Activated naive CD4-positive, alpha-beta T cell treated with anti-CD3 and anti-CD28 coated beads, Interleukin-2, amount 10 ng/mL, durations not matched to agents 7 days and 5 days (primary cell): ENCODE measurements at regions of chr10 and their contacts with region 1.

Region 1: GRCh38 chr10:132446661-132447194 is 49.7 kb downstream of the PWWP2B start:
- DNase-seq: peak; percentile 89
- H3K4me3 Mint-ChIP-seq: peak overlapping the region; percentile 72
- H3K27ac Mint-ChIP-seq: peak overlapping the region; percentile 97
- H3K4me1 Mint-ChIP-seq: peaks cover 56% of the 10 kb centered on the region
- H3K27me3 Mint-ChIP-seq: no peaks in the 10 kb centered on the region

Region 2: DNA sequence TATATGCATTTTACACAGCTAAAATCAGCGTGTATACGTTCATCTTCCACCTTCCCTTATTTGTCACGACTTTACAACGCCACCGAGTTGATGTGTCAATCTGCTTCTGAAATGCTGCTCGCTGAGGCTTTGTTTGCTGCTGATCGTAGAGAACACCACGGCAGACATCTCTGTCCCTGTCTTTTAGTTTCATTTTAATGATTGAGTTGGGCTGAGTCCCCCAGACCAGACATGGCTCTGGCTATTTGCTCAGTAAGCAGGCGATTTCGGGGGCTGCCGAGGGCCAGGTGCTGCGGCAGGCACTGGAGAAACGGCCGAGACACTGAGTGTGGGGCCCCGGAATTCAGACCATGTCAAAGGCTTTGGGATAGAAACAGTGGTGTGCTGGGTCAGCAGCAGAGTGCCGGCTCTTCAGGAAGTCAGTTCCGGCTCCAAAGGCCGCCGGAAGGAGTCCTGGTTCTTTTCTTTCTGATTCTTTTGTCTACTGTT is 109.8 kb before region 1 on chr10:
- CTCF ChIA-PET with region 1: no interaction called
- DNase-seq: peak; percentile 33
- H3K4me3 Mint-ChIP-seq: peak overlapping the region; percentile 72
- H3K27ac Mint-ChIP-seq: peak overlapping the region; percentile 9
- H3K4me1 Mint-ChIP-seq: peaks cover 38% of the 10 kb centered on the region
- H3K27me3 Mint-ChIP-seq: peaks cover 12% of the 10 kb centered on the region

Region 3: DNA sequence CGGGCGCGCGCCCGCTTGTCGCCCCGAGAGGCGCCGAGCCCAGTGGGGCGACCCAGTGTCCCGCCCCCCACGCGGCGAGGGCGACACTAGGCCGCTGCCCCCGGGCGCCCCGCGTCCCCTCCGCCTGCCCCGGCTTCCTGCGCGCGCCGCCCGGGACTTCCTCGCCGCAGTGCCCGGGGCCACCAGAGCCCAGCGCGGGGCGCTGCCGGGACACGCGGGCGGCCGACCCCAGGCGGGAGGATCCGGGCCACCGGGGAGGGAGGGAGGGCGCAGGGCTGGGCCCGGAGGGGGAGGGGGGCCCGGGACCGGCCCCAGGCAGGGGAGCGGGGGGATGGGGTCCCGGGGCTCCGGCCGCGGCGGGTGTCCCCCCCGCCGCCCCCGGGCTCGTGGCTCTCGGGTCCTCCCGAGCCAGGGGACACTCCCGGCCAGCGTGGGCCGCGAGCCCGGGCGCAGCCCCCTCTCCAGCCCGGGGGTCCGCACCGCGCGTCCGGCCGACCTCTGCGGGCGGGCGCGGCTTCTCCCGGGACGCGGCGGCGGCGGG is 50.2 kb before region 1 on chr10:
- CTCF ChIA-PET with region 1: interaction called, 13 read pairs
- DNase-seq: peak; percentile 76
- H3K4me3 Mint-ChIP-seq: peak overlapping the region; percentile 23
- H3K27ac Mint-ChIP-seq: no peak overlapping the region
- H3K4me1 Mint-ChIP-seq: peaks cover 12% of the 10 kb centered on the region
- H3K27me3 Mint-ChIP-seq: peaks cover 7% of the 10 kb centered on the region

Region 4: GRCh38 chr10:132464253-132465192 is 17.8 kb after region 1 on chr10:
- CTCF ChIA-PET with region 1: no interaction called
- DNase-seq: peak; percentile 10
- H3K4me3 Mint-ChIP-seq: no peak overlapping the region
- H3K27ac Mint-ChIP-seq: no peak overlapping the region
- H3K4me1 Mint-ChIP-seq: no peaks in the 10 kb centered on the region
- H3K27me3 Mint-ChIP-seq: peaks cover 4% of the 10 kb centered on the region